T-cell (primary cell): ENCODE measurements at regions of chr3 and their contacts with region 1.

Region 1: GRCh38 chr3:30751610-30752299 is 142.7 kb downstream of the GADL1 start:
- DNase-seq: peak; percentile 18 to 74 (median 51)
- ATAC-seq: peak in 3 of 4 experiments; percentile 19 to 75 (median 53)
- H3K4me3 ChIP-seq: no peak overlapping the region
- H3K4me3 Mint-ChIP-seq: no peak overlapping the region
- H3K27ac ChIP-seq: no peak overlapping the region
- H3K27ac Mint-ChIP-seq: no peak overlapping the region
- H3K4me1 ChIP-seq: no peaks in the 10 kb centered on the region
- H3K4me1 Mint-ChIP-seq: peaks cover 2 to 8% (median 7%) of the 10 kb centered on the region in 3 donors
- H3K27me3 ChIP-seq: no peaks in the 10 kb centered on the region
- H3K27me3 Mint-ChIP-seq: peaks cover 3 to 7% of the 10 kb centered on the region in 2 donors

Region 2: DNA sequence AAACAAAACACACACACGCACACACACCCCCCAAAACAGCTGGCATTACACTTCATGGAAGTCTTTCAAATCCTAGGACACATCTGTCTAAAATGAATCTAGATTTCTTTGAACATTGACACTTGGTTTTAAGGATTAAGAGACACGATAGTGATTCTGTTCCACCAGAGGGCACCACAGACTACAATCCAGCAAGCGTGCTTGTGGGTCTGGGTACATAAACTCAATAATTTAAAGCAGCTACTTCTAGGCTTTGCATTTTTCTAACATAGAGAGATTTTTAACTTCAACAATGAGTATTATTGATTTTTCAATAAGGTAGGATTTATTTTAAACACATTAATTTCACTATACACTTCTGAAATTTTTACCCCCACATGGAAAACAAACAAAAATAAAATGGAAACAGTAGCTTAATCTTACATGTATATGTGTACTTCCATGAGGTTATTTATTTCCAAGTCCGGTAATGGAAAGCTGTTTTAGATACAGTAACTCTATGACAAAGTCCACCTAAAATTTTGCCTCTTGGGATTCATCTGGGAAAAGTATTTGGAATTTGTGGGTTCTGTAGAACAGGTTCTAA is 709.4 kb before region 1 on chr3:
- CTCF ChIA-PET with region 1: interaction called, 9 to 14 read pairs
- POLR2A ChIA-PET with region 1: no interaction called
- DNase-seq: peak in 34 of 35 experiments; percentile 16 to 76 (median 52)
- ATAC-seq: peak in 1 of 4 experiments; percentile 41
- H3K4me3 ChIP-seq: no peak overlapping the region
- H3K4me3 Mint-ChIP-seq: no peak overlapping the region
- H3K27ac ChIP-seq: no peak overlapping the region
- H3K27ac Mint-ChIP-seq: no peak overlapping the region
- H3K4me1 ChIP-seq: no peaks in the 10 kb centered on the region
- H3K4me1 Mint-ChIP-seq: no peaks in the 10 kb centered on the region
- H3K27me3 ChIP-seq: no peaks in the 10 kb centered on the region
- H3K27me3 Mint-ChIP-seq: peaks cover 19 to 22% of the 10 kb centered on the region in 2 donors